Mammary epithelial cell (primary cell): ENCODE measurements at regions of chr20 and their contacts with region 1.

Region 1: GRCh38 chr20:61886721-61887594 is 178.7 kb downstream of the TAF4 start:
- DNase-seq: peak; percentile 14
- H3K4me3 ChIP-seq: no peak overlapping the region
- H3K27ac ChIP-seq: no peak overlapping the region
- H3K4me1 ChIP-seq: no peaks in the 10 kb centered on the region
- H3K27me3 ChIP-seq: no peaks in the 10 kb centered on the region
- CTCF ChIP-seq: peak; percentile 85 to 90

Region 2: GRCh38 chr20:61724376-61724775 is 162.6 kb before region 1 on chr20:
- CTCF ChIA-PET with region 1: no interaction called
- dilution Hi-C with region 1: no loop called
- in situ Hi-C with region 1: no loop called
- intact Hi-C with region 1: loop called (anchors 5 kb)
- DNase-seq: no peak
- H3K4me3 ChIP-seq: no peak overlapping the region
- H3K27ac ChIP-seq: no peak overlapping the region
- H3K4me1 ChIP-seq: no peaks in the 10 kb centered on the region
- H3K27me3 ChIP-seq: no peaks in the 10 kb centered on the region
- CTCF ChIP-seq: peak; percentile 28 to 45

Region 3: DNA sequence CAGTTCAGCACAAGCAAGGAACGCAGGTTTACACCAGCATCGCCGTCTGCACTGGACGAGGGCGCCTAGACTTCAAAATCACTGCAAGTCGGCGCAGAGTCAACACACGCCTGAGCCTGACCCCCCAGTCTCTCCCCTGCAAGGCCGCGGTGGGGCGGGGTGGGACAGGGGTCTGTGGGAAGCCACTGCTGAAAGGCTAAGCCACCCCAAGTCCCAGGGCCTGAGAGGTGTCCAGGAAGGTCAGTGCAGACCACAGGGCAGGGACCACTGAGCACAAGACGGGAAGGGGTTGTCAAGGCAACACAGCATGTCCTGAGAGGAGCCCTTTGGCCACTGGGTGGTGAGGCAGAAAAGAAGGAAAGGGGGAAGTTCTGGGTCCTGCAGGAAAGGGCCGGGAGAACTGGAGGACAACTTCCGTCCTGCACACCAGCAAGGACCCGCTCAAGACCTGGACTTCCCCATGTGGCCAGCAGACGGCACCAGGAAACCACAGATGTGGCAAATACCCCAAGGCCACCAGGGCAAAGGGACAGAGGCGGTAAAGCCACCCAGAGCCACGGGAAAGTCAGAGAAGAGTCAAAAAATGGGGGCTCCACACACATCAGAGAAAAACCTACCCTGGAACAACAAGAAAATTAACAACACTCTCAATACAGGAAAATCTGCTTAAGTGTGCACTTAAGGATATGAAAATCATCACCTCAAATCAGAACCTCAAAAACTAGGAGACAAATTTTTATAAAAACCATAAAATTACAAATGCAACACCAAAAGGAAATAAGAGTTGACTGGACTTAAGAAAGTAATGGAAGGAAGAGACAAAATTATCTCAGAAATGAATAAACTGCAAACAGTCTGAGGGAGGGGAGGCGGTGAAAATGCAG is 94.0 kb after region 1 on chr20:
- CTCF ChIA-PET with region 1: no interaction called
- dilution Hi-C with region 1: no loop called
- in situ Hi-C with region 1: no loop called
- intact Hi-C with region 1: no loop called
- DNase-seq: no peak
- H3K4me3 ChIP-seq: no peak overlapping the region
- H3K27ac ChIP-seq: no peak overlapping the region
- H3K4me1 ChIP-seq: no peaks in the 10 kb centered on the region
- H3K27me3 ChIP-seq: no peaks in the 10 kb centered on the region
- CTCF ChIP-seq: peak; percentile 47 to 66

Region 4: GRCh38 chr20:61991476-61991875 is 104.5 kb after region 1 on chr20:
- CTCF ChIA-PET with region 1: no interaction called
- dilution Hi-C with region 1: no loop called
- in situ Hi-C with region 1: no loop called
- intact Hi-C with region 1: no loop called
- DNase-seq: no peak
- H3K4me3 ChIP-seq: no peak overlapping the region
- H3K27ac ChIP-seq: no peak overlapping the region
- H3K4me1 ChIP-seq: no peaks in the 10 kb centered on the region
- H3K27me3 ChIP-seq: no peaks in the 10 kb centered on the region
- CTCF ChIP-seq: no peak

Region 5: DNA sequence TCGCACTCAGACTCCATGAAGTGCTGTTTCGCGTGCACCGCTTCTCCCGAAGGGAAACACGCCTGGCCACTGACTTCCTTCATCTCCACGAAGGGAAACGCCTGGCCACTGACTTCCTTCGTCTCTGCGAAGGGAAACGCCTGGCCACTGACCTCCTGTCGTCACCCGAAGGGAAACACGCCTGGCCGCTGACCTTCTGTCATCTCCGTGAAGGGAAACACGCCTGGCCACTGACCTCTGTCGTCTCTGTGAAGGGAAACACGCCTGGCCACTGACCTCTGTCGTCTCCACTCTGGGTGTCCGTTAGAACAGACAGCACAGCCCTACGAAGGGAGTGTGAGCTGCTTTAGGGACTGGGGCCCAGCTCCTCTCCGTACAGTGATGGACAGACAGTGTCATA is 398.8 kb after region 1 on chr20:
- CTCF ChIA-PET with region 1: no interaction called
- dilution Hi-C with region 1: no loop called
- in situ Hi-C with region 1: no loop called
- intact Hi-C with region 1: no loop called
- DNase-seq: no peak
- H3K4me3 ChIP-seq: no peak overlapping the region
- H3K27ac ChIP-seq: no peak overlapping the region
- H3K4me1 ChIP-seq: no peaks in the 10 kb centered on the region
- H3K27me3 ChIP-seq: no peaks in the 10 kb centered on the region
- CTCF ChIP-seq: no peak